GM12878 (cell line): ENCODE measurements at regions of chr5 and their contacts with region 1.

Region 1: GRCh38 chr5:37005946-37006540 is 129.5 kb downstream of the NIPBL start:
- DNase-seq: no peak
- ATAC-seq: peak; percentile 66
- H3K4me3 ChIP-seq: no peak overlapping the region
- H3K27ac ChIP-seq: no peak overlapping the region
- H3K4me1 ChIP-seq: no peaks in the 10 kb centered on the region
- H3K27me3 ChIP-seq: no peaks in the 10 kb centered on the region
- CTCF ChIP-seq: peak; percentile 42 to 57 (median 56); a peak in 4 of 6 replicates
- EP300 ChIP-seq: no peak
- POLR2A ChIP-seq: no peak
- RAD21 ChIP-seq: peak; percentile 52; the same call in 1 of the 2 replicates

Region 2: GRCh38 chr5:36614657-36615308 is 391.3 kb before region 1 on chr5:
- CTCF ChIA-PET with region 1: no interaction called
- POLR2A ChIA-PET with region 1: no interaction called
- RAD21 ChIA-PET with region 1: no interaction called
- SMC1A ChIA-PET with region 1: no interaction called
- in situ Hi-C with region 1: no loop called
- intact Hi-C with region 1: no loop called
- DNase-seq: no peak
- ATAC-seq: no peak
- H3K4me3 ChIP-seq: no peak overlapping the region
- H3K27ac ChIP-seq: no peak overlapping the region
- H3K4me1 ChIP-seq: no peaks in the 10 kb centered on the region
- H3K27me3 ChIP-seq: peaks cover 0 to 2% of the 10 kb centered on the region in 2 experiments; a peak in 1 of 4 replicates
- CTCF ChIP-seq: no peak
- EP300 ChIP-seq: no peak
- POLR2A ChIP-seq: no peak
- RAD21 ChIP-seq: no peak

Region 3: DNA sequence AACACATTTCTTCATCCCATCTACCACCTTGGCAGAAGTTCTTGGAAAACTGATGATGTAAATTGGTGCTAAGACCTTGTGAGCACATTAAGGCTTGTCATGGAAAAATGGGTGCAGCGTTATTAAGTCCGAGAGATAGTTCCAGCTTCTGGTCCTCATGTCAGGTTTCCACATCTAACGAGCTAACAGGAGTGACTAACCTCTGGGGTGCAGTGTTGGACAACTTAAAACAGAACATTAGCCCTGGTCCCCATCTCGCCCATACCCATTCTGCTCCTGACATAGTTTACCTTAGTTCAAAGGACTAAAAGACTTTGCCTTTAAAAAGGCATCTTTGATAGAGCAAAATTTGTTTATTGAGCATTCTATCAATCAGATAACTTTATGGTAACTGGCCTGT is 271.6 kb before region 1 on chr5:
- CTCF ChIA-PET with region 1: interaction called, 47 read pairs
- POLR2A ChIA-PET with region 1: no interaction called
- RAD21 ChIA-PET with region 1: interaction called, 5 read pairs
- SMC1A ChIA-PET with region 1: interaction called, 27 read pairs
- in situ Hi-C with region 1: loop called (anchors 5 kb)
- intact Hi-C with region 1: loop called (anchors 2 kb)
- DNase-seq: no peak
- ATAC-seq: peak; percentile 80
- H3K4me3 ChIP-seq: no peak overlapping the region
- H3K27ac ChIP-seq: no peak overlapping the region
- H3K4me1 ChIP-seq: no peaks in the 10 kb centered on the region
- H3K27me3 ChIP-seq: no peaks in the 10 kb centered on the region
- CTCF ChIP-seq: peak in 2 of 3 experiments; percentile 6 to 50; a peak in 3 of 6 replicates
- EP300 ChIP-seq: no peak
- POLR2A ChIP-seq: no peak
- RAD21 ChIP-seq: peak; percentile 51

Region 4: DNA sequence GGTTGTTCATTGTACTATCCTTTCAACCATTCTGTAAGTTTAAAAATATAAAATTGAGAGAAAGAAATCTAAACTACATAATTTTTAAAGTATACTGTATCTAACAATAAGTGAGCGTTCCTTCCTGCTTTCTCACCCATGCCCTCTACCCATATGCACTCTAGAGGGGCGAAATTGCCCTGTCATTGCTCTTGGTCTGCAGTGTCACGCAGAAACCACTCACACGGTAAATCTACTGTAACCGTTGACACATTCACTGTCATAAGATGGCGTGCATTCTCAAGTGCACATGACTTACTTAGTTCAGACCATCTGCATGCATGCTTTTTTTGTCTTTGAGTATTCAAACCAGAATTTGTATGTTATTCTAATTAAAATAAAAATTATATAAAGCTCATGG is 185.1 kb before region 1 on chr5:
- CTCF ChIA-PET with region 1: no interaction called
- POLR2A ChIA-PET with region 1: no interaction called
- RAD21 ChIA-PET with region 1: no interaction called
- SMC1A ChIA-PET with region 1: no interaction called
- in situ Hi-C with region 1: no loop called
- intact Hi-C with region 1: no loop called
- DNase-seq: no peak
- ATAC-seq: no peak
- H3K4me3 ChIP-seq: no peak overlapping the region
- H3K27ac ChIP-seq: no peak overlapping the region
- H3K4me1 ChIP-seq: no peaks in the 10 kb centered on the region
- H3K27me3 ChIP-seq: no peaks in the 10 kb centered on the region
- CTCF ChIP-seq: no peak
- EP300 ChIP-seq: no peak
- POLR2A ChIP-seq: no peak
- RAD21 ChIP-seq: no peak